Activated T-helper 1 cell treated with anti-CD3 and anti-CD28 coated beads, Interleukin-12 subunit alpha, Interleukin-12 subunit beta, Interleukin-2, Interleukin-4 antibody, amounts not matched to agents 30 ng/mL and 10 ng/mL and 1 ng/mL, durations not matched to agents 14 hours and 24 hours and 36 hours (primary cell): ENCODE measurements at regions of chr1 and their contacts with region 1.

Region 1: GRCh38 chr1:228165372-228166169 is at the start of gene IBA57:
- DNase-seq: peak; percentile 99
- H3K4me3 Mint-ChIP-seq: peak within 1 kb of the TSS; percentile 86
- H3K27ac Mint-ChIP-seq: peak within 1 kb of the TSS; percentile 94
- H3K4me1 Mint-ChIP-seq: peaks cover 21% of the 10 kb centered on the region
- H3K27me3 Mint-ChIP-seq: no peaks in the 10 kb centered on the region
- total RNA-seq, gene IBA57: 7.5 and 8.1 TPM in 2 replicates

Region 2: GRCh38 chr1:226754793-226755533 is 1410.6 kb before region 1 on chr1:
- intact Hi-C with region 1: no loop called
- DNase-seq: no peak
- H3K4me3 Mint-ChIP-seq: no peak overlapping the region
- H3K27ac Mint-ChIP-seq: no peak overlapping the region
- H3K4me1 Mint-ChIP-seq: peaks cover 11% of the 10 kb centered on the region
- H3K27me3 Mint-ChIP-seq: peaks cover 2% of the 10 kb centered on the region

Region 3: GRCh38 chr1:226964068-226964425 is 1201.5 kb before region 1 on chr1:
- intact Hi-C with region 1: no loop called
- DNase-seq: no peak
- H3K4me3 Mint-ChIP-seq: no peak overlapping the region
- H3K27ac Mint-ChIP-seq: no peak overlapping the region
- H3K4me1 Mint-ChIP-seq: peaks cover 5% of the 10 kb centered on the region
- H3K27me3 Mint-ChIP-seq: no peaks in the 10 kb centered on the region

Region 4: GRCh38 chr1:227734856-227735538 is 430.6 kb before region 1 on chr1 and contains the starts of genes JMJD4 and SNAP47:
- intact Hi-C with region 1: loop called (anchors 1 kb)
- DNase-seq: peak; percentile 93
- H3K4me3 Mint-ChIP-seq: peak within 1 kb of the TSS; percentile 98
- H3K27ac Mint-ChIP-seq: peak within 1 kb of the TSS; percentile 97
- H3K4me1 Mint-ChIP-seq: peaks cover 25% of the 10 kb centered on the region
- H3K27me3 Mint-ChIP-seq: no peaks in the 10 kb centered on the region
- total RNA-seq, gene JMJD4: 33.9 and 37.5 TPM in 2 replicates
- total RNA-seq, gene SNAP47: 32.2 and 33.7 TPM in 2 replicates

Region 5: GRCh38 chr1:228102791-228103620 is 62.6 kb before region 1 on chr1 and contains the start of gene C1orf35:
- intact Hi-C with region 1: loop called (anchors 1 kb)
- DNase-seq: peak; percentile 96
- H3K4me3 Mint-ChIP-seq: peak within 1 kb of the TSS; percentile 92
- H3K27ac Mint-ChIP-seq: peak within 1 kb of the TSS; percentile 93
- H3K4me1 Mint-ChIP-seq: peaks cover 25% of the 10 kb centered on the region
- H3K27me3 Mint-ChIP-seq: no peaks in the 10 kb centered on the region
- total RNA-seq, gene C1orf35: 27.7 and 30.7 TPM in 2 replicates

Region 6: GRCh38 chr1:228118040-228118439 is 47.5 kb before region 1 on chr1:
- intact Hi-C with region 1: no loop called
- DNase-seq: no peak
- H3K4me3 Mint-ChIP-seq: no peak overlapping the region
- H3K27ac Mint-ChIP-seq: no peak overlapping the region
- H3K4me1 Mint-ChIP-seq: no peaks in the 10 kb centered on the region
- H3K27me3 Mint-ChIP-seq: peaks cover 2% of the 10 kb centered on the region

Region 7: GRCh38 chr1:228139944-228140656 is 25.5 kb before region 1 on chr1 and contains the start of gene GUK1:
- intact Hi-C with region 1: loop called (anchors 1 kb)
- DNase-seq: peak; percentile 100
- H3K4me3 Mint-ChIP-seq: peak within 1 kb of the TSS; percentile 100
- H3K27ac Mint-ChIP-seq: peak within 1 kb of the TSS; percentile 97
- H3K4me1 Mint-ChIP-seq: peaks cover 22% of the 10 kb centered on the region
- H3K27me3 Mint-ChIP-seq: peaks cover 21% of the 10 kb centered on the region
- total RNA-seq, gene GUK1: 201 and 202 TPM in 2 replicates

Region 8: GRCh38 chr1:228378090-228378872 is 212.7 kb after region 1 on chr1:
- intact Hi-C with region 1: loop called (anchors 1 kb)
- DNase-seq: peak; percentile 41
- H3K4me3 Mint-ChIP-seq: peak overlapping the region; percentile 79
- H3K27ac Mint-ChIP-seq: no peak overlapping the region
- H3K4me1 Mint-ChIP-seq: no peaks in the 10 kb centered on the region
- H3K27me3 Mint-ChIP-seq: peaks cover 25% of the 10 kb centered on the region

Region 9: GRCh38 chr1:228486596-228487335 is 321.2 kb after region 1 on chr1:
- intact Hi-C with region 1: loop called (anchors 1 kb)
- DNase-seq: peak; percentile 84
- H3K4me3 Mint-ChIP-seq: peak overlapping the region; percentile 97
- H3K27ac Mint-ChIP-seq: peak overlapping the region; percentile 99
- H3K4me1 Mint-ChIP-seq: peaks cover 29% of the 10 kb centered on the region
- H3K27me3 Mint-ChIP-seq: peaks cover 7% of the 10 kb centered on the region